ENCODE measurements at regions of chr11 and their contacts with region 1.

Region 1: DNA sequence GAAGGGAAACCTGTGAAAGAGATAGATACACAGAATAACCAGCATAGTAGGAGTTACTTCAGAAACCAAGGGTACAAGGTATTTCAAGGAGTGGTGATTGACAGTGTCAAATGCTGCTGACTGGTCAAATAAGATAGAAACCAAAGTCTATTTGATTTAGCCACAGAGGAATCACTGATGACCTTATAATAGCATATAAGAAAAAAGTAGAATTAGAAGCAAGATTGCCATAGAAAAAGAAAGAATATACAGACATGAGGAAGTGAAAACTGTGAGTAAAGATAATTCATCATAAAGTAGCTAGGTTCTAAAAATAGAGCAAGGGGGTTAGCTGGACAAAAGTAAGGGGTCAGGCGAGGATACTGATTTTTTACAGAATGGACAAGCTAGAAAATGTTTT is 14.2 kb downstream of the ZBTB44 start:
- DNase-seq: no peak
- ATAC-seq: no peak
- H3K4me3 ChIP-seq: no peak overlapping the region
- H3K27ac ChIP-seq: no peak overlapping the region
- H3K4me1 ChIP-seq: no peaks in the 10 kb centered on the region
- H3K27me3 ChIP-seq: no peaks in the 10 kb centered on the region
- CTCF ChIP-seq: no peak
- POLR2A ChIP-seq: no peak
- RAD21 ChIP-seq: no peak

Region 2: GRCh38 chr11:130227373-130227772 is 73.2 kb before region 1 on chr11:
- CTCF ChIA-PET with region 1: no interaction called
- POLR2A ChIA-PET with region 1: no interaction called
- dilution Hi-C with region 1: no loop called
- in situ Hi-C with region 1: no loop called
- intact Hi-C with region 1: loop called (anchors 5 kb)
- DNase-seq: no peak
- ATAC-seq: no peak
- H3K4me3 ChIP-seq: no peak overlapping the region
- H3K27ac ChIP-seq: no peak overlapping the region
- H3K4me1 ChIP-seq: no peaks in the 10 kb centered on the region
- H3K27me3 ChIP-seq: no peaks in the 10 kb centered on the region
- CTCF ChIP-seq: no peak
- POLR2A ChIP-seq: no peak
- RAD21 ChIP-seq: no peak

Region 3: DNA sequence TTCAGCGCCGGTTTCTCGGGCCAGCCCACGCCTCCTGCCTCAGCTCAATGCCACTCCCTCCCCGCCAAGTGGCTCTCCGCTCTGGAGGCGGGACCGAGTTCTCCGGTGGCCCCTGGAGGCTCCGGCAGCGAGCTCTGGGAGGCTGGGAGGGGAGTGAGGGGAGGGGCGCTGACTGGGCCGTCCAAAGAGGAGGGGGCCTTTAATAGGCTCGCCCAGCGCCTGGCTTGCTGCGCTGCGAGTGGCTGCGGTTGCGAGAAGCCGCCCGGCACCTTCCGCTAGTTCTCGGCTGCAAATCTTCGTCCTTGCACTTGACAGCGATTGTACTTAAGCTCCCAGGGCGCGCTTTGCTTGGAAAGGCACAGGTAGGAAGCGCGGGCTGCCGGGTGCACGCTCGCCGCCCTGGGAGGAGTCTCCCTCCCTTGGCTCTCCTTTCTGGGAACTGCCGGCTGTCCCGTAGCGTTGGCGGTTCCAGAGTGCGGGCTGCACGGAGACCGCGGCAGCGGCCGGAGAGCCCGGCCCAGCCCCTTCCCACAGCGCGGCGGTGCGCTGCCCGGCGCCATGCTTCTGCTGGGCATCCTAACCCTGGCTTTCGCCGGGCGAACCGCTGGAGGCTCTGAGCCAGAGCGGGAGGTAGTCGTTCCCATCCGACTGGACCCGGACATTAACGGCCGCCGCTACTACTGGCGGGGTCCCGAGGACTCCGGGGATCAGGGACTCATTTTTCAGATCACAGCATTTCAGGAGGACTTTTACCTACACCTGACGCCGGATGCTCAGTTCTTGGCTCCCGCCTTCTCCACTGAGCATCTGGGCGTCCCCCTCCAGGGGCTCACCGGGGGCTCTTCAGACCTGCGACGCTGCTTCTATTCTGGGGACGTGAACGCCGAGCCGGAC is 148.1 kb after region 1 on chr11 and contains the start of gene ADAMTS15:
- CTCF ChIA-PET with region 1: no interaction called
- POLR2A ChIA-PET with region 1: no interaction called
- dilution Hi-C with region 1: no loop called
- in situ Hi-C with region 1: no loop called
- intact Hi-C with region 1: no loop called
- DNase-seq: peak; percentile 84
- ATAC-seq: peak; percentile 91
- H3K4me3 ChIP-seq: peak within 1 kb of the TSS; percentile 81
- H3K27ac ChIP-seq: peak within 1 kb of the TSS; percentile 57
- H3K4me1 ChIP-seq: peaks cover 9% of the 10 kb centered on the region
- H3K27me3 ChIP-seq: 0 out of 2 replicates have a peak, but pooled peaks cover 2% of the 10 kb centered on the region
- CTCF ChIP-seq: no peak
- POLR2A ChIP-seq: no peak
- RAD21 ChIP-seq: no peak
- total RNA-seq, gene ADAMTS15: 3.0 and 3.1 TPM in 2 replicates

Region 4: DNA sequence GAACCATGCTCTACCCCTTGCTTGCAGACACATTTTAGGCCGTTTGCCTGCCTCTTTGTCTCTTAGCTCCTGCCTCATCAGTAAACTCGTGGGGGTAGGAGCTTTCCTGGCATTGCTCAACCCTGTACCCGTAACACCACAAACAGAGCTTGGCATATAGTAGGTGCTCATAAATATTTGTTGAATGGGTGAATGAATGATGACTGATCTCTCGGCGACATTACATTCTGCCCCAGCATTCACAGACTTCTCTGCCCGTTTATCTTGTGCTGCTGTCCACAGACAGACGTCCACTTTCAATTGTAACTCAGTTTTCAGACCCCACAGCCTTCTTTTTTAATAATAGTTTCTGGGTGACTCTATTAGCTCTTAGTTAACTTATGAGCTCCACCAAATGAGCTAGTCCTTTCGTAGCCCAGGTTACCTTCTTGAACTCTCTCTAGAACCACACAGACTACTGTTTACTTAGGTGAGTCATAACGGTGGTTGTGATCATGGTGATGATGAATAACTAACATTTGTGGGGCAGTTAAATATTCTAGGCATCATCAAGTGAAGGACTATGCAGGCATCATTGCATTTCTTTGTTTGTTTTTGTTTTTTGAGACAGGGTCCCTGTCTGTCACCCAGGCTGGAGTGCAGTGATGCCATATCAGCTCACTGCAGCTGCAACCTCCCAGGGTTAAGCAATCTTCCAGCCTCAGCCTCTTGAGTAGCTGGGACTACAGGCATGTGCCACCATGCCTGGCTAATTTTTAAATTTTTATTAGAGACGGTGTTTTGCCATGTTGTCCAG is 336.4 kb after region 1 on chr11:
- CTCF ChIA-PET with region 1: no interaction called
- POLR2A ChIA-PET with region 1: no interaction called
- dilution Hi-C with region 1: no loop called
- in situ Hi-C with region 1: no loop called
- intact Hi-C with region 1: no loop called
- DNase-seq: peak; percentile 92
- ATAC-seq: peak; percentile 66
- H3K4me3 ChIP-seq: no peak overlapping the region
- H3K27ac ChIP-seq: peak overlapping the region; percentile 79
- H3K4me1 ChIP-seq: peaks cover 30% of the 10 kb centered on the region
- H3K27me3 ChIP-seq: no peaks in the 10 kb centered on the region
- CTCF ChIP-seq: no peak
- POLR2A ChIP-seq: no peak
- RAD21 ChIP-seq: peak; percentile 17; the same call in 1 of the 2 replicates